ENCODE measurements at regions of chr2 and their contacts with region 1.

Region 1: GRCh38 chr2:71923887-71924533 is 223.7 kb downstream of the CYP26B1 start:
- DNase-seq: peak; percentile 72
- CTCF ChIP-seq: peak; percentile 73

Region 2: GRCh38 chr2:71907503-71907902 is 16.5 kb before region 1 on chr2:
- CTCF ChIA-PET with region 1: interaction called, 25 read pairs
- POLR2A ChIA-PET with region 1: no interaction called
- DNase-seq: no peak
- CTCF ChIP-seq: no peak

Region 3: DNA sequence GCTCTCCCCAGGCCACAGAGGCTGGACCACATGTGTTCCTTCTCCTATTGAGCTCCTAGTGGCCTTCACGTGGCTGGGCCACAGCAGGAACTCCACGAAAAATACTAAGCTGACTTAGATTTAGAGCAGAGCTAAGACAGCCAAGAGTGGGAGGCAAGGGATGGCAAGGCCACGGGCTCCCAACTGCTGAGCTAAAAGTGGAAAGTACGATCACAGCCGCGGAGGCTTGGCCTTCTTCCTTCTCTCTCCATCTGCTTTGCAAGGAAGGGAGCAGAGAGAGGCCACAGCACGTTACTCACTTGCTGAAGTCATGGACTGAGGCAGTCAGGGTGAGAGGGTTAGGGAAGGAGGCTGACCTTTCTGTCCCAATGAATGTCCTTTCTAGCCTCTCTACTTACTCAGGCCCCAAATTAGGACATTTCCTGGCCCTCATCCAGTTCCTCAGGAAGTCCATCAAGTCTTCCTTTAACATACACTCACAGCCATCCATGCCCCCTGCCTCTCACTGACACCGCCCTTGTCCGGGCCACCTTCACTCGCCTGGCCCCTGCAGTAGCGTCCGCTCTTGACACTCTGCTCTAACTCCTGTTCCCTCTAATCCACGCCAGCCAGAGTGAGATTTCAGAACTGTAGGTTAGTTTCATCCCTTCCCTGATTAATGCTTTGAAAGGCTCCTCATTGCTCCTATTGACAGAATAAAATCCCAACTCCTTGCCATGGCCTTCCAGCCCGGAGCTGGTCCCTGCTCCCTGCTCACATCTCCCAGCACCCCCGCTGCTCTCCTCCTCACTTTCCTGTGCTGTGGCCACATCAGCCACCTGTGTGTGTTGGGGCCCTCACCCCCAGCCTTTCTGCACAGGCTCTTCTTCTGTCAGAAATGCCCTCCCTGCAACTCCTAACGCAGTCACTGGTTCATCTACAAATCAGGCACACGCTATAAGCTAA is 19.5 kb after region 1 on chr2:
- CTCF ChIA-PET with region 1: interaction called, 15 read pairs
- POLR2A ChIA-PET with region 1: no interaction called
- DNase-seq: no peak
- CTCF ChIP-seq: no peak

Region 4: GRCh38 chr2:71950256-71951082 is 26.5 kb after region 1 on chr2:
- CTCF ChIA-PET with region 1: interaction called, 15 read pairs
- POLR2A ChIA-PET with region 1: no interaction called
- DNase-seq: no peak
- CTCF ChIP-seq: no peak

Region 5: DNA sequence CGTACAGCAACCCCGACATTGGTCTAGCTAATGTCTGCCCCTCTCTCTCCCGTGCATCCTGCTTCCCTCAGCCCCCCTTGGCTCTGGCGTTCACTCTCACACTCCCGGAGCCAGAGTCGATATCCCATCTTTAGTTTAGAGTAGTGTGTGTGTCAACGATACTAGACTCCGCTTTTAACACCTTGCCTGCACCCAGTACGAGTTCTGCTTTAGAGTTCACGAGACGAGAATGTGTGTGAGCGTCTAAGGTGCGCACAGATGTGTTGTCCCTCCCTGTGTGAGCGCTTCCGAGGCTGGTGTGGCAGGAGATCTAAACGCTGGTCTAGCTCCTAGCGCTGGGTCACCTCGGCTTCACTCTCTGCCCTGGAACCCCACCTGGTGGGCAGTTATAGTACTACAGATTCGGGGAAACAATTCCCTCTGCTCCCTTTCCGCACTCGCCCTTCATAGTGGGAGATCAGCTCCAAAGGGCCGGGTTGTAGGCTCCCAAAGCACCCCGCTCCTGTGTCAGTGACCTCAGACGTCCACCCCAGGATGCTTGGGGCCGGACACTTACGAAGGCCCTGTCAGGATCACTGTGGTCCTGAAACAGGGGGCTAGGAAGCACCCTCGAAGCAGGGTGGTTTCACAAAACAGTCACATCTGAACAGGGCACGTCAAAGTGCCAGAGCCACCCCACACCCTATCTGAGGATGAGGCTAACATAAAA is 226.3 kb after region 1 on chr2:
- CTCF ChIA-PET with region 1: interaction called, 75 read pairs
- POLR2A ChIA-PET with region 1: no interaction called
- DNase-seq: peak; percentile 77
- CTCF ChIP-seq: peak; percentile 68

Region 6: GRCh38 chr2:72579591-72580180 is 655.7 kb after region 1 on chr2:
- CTCF ChIA-PET with region 1: interaction called, 44 read pairs
- POLR2A ChIA-PET with region 1: no interaction called
- DNase-seq: peak; percentile 18
- CTCF ChIP-seq: peak; percentile 41

Measured in GM10248 (cell line).